Activated CD4-positive, alpha-beta T cell treated with anti-CD3 and anti-CD28 coated beads, Interleukin-2, amount 10 ng/mL, durations not matched to agents 7 days and 5 days (primary cell): ENCODE measurements at regions of chr7 and their contacts with region 1.

Region 1: GRCh38 chr7:92534572-92534971 is 6.0 kb downstream of the RBM48 start:
- DNase-seq: no peak
- H3K4me3 Mint-ChIP-seq: no peak overlapping the region
- H3K27ac Mint-ChIP-seq: no peak overlapping the region
- H3K4me1 Mint-ChIP-seq: peaks cover 28% of the 10 kb centered on the region
- H3K27me3 Mint-ChIP-seq: no peaks in the 10 kb centered on the region

Region 2: GRCh38 chr7:92547579-92547978 is 13.0 kb after region 1 on chr7:
- CTCF ChIA-PET with region 1: interaction called, 10 read pairs
- POLR2A ChIA-PET with region 1: no interaction called
- DNase-seq: no peak
- H3K4me3 Mint-ChIP-seq: no peak overlapping the region
- H3K27ac Mint-ChIP-seq: no peak overlapping the region
- H3K4me1 Mint-ChIP-seq: no peaks in the 10 kb centered on the region
- H3K27me3 Mint-ChIP-seq: peaks cover 2% of the 10 kb centered on the region